Uterus (tissue), 4 donors: ENCODE measurements at regions of chr6 and their contacts with region 1.

Region 1: GRCh38 chr6:56359201-56359899 is 112.0 kb upstream of the COL21A1 start:
- DNase-seq: peak; percentile 64 to 85
- H3K4me3 ChIP-seq: no peak overlapping the region
- H3K27ac ChIP-seq: peak overlapping the region; percentile 11 to 62
- H3K4me1 ChIP-seq: no peaks in the 10 kb centered on the region
- H3K27me3 ChIP-seq: no peaks in the 10 kb centered on the region
- CTCF ChIP-seq: peak; percentile 76 to 94 (median 87)
- POLR2A ChIP-seq: no peak

Region 2: GRCh38 chr6:56437171-56437900 is 78.0 kb after region 1 on chr6:
- intact Hi-C with region 1: no loop called
- DNase-seq: no peak
- H3K4me3 ChIP-seq: no peak overlapping the region
- H3K27ac ChIP-seq: no peak overlapping the region
- H3K4me1 ChIP-seq: no peaks in the 10 kb centered on the region
- H3K27me3 ChIP-seq: no peaks in the 10 kb centered on the region
- CTCF ChIP-seq: no peak
- POLR2A ChIP-seq: no peak

Region 3: GRCh38 chr6:56595490-56596122 is 236.3 kb after region 1 on chr6:
- intact Hi-C with region 1: loop called (anchors 10 kb)
- DNase-seq: peak; percentile 29 to 51
- H3K4me3 ChIP-seq: no peak overlapping the region
- H3K27ac ChIP-seq: peak overlapping the region in 1 of 2 donors; percentile 2
- H3K4me1 ChIP-seq: peaks cover 0 to 5% of the 10 kb centered on the region in 2 donors
- H3K27me3 ChIP-seq: no peaks in the 10 kb centered on the region
- CTCF ChIP-seq: peak; percentile 43 to 64 (median 59)
- POLR2A ChIP-seq: no peak

Region 4: GRCh38 chr6:56607111-56607752 is 247.9 kb after region 1 on chr6:
- intact Hi-C with region 1: no loop called
- DNase-seq: no peak
- H3K4me3 ChIP-seq: no peak overlapping the region
- H3K27ac ChIP-seq: no peak overlapping the region
- H3K4me1 ChIP-seq: no peaks in the 10 kb centered on the region
- H3K27me3 ChIP-seq: no peaks in the 10 kb centered on the region
- CTCF ChIP-seq: no peak
- POLR2A ChIP-seq: no peak